CD4-positive, alpha-beta memory T cell (primary cell): ENCODE measurements at regions of chr9 and their contacts with region 1.

Region 1: DNA sequence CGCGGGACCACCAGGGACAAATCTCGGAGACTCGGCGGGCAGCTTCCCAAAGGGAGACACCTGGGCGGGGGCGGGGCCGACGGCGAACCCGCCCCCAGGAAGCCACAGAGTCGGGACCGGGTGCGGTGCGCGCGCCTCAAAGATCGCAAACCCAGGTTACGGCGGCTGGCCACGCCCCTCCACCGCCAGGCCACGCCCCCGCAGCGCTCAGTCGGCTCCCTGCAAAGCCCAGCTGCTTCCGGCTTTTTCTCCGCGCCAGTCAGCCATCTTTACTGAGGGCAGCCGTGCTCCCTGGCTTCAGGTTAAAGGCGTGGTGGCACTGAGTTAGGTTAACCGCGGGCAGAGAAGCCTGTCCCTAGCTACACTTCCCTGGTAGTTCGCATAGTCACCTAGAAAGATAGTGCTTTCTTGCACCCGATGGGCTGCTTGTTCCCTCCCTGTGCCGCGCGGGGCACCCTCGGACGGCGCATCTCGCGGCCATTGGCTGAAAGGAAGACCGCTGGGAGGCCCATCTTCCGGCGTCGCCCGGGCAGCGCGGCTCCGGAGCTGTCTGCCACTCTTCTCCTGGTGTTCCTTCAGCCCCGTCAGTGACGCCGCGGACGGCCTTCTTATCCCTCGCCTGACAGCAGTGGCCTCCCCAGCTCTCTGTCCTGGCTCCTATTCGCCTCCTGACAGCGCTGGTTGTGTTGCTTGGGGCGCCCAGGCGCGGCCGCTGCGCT is at the start of gene TBC1D2:
- DNase-seq: peak; percentile 96 to 98 (median 97)
- H3K4me3 ChIP-seq: peak within 1 kb of the TSS; percentile 90 to 91
- H3K4me3 Mint-ChIP-seq: peak within 1 kb of the TSS; percentile 93 to 99 (median 97)
- H3K27ac ChIP-seq: peak within 1 kb of the TSS; percentile 82
- H3K27ac Mint-ChIP-seq: peak within 1 kb of the TSS; percentile 87 to 97 (median 95)
- H3K4me1 ChIP-seq: peaks cover 35% of the 10 kb centered on the region
- H3K4me1 Mint-ChIP-seq: peaks cover 23 to 50% (median 40%) of the 10 kb centered on the region in 4 donors
- H3K27me3 ChIP-seq: no peaks in the 10 kb centered on the region
- H3K27me3 Mint-ChIP-seq: no peaks in the 10 kb centered on the region
- total RNA-seq, gene TBC1D2: 11.2 to 11.4 TPM

Region 2: GRCh38 chr9:97696803-97697601 is 558.7 kb before region 1 on chr9 and contains the start of gene XPA:
- CTCF ChIA-PET with region 1: interaction called, 4 read pairs
- POLR2A ChIA-PET with region 1: interaction called, 7 read pairs
- intact Hi-C with region 1: loop called (anchors 10 kb)
- DNase-seq: peak; percentile 96 to 97 (median 96)
- H3K4me3 ChIP-seq: peak within 1 kb of the TSS; percentile 4 to 82
- H3K4me3 Mint-ChIP-seq: peak within 1 kb of the TSS; percentile 86 to 96 (median 92)
- H3K27ac ChIP-seq: peak within 1 kb of the TSS; percentile 68
- H3K27ac Mint-ChIP-seq: peak within 1 kb of the TSS; percentile 86 to 98 (median 96)
- H3K4me1 ChIP-seq: peaks cover 44% of the 10 kb centered on the region
- H3K4me1 Mint-ChIP-seq: peaks cover 41 to 56% (median 49%) of the 10 kb centered on the region in 4 donors
- H3K27me3 ChIP-seq: no peaks in the 10 kb centered on the region
- H3K27me3 Mint-ChIP-seq: no peaks in the 10 kb centered on the region
- total RNA-seq, gene XPA: 24.0 to 25.5 TPM

Region 3: DNA sequence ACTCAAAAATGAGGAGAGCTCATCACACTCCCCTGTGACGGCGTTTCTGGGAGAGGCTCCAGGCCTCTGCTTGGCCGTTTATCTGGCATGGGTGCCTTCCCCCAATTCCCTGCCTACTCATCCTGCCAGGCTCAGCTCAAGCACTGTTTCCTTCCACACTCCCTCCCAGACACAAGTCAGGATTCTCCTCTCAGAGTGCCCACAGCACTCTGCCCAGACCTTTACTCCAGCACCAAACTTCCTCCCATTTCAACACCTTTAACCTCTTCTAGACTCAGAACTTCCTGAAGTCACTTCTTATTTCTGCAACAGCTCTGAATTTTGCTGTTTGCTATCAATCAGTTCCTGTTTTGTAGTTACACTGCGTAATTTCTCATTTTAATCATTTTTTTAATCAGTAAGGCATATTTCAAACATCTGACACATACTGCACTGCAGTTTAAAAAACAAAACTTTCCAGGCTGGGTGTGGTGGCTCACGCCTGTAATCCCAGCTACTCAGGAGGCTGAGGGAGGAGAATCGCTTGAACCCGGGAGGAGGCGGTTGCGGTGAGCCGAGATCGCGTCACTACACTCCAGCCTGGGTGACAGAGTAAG is 349.4 kb before region 1 on chr9:
- CTCF ChIA-PET with region 1: interaction called, 3 read pairs
- POLR2A ChIA-PET with region 1: interaction called, 11 read pairs
- intact Hi-C with region 1: loop called (anchors 5 kb)
- DNase-seq: peak; percentile 63 to 89 (median 70)
- H3K4me3 ChIP-seq: peak overlapping the region in 1 of 2 donors; percentile 45
- H3K4me3 Mint-ChIP-seq: peak overlapping the region; percentile 80 to 94 (median 86)
- H3K27ac ChIP-seq: peak overlapping the region; percentile 73
- H3K27ac Mint-ChIP-seq: peak overlapping the region; percentile 93 to 99 (median 98)
- H3K4me1 ChIP-seq: peaks cover 100% of the 10 kb centered on the region
- H3K4me1 Mint-ChIP-seq: peaks cover 57 to 94% (median 76%) of the 10 kb centered on the region in 4 donors
- H3K27me3 ChIP-seq: no peaks in the 10 kb centered on the region
- H3K27me3 Mint-ChIP-seq: no peaks in the 10 kb centered on the region

Region 4: DNA sequence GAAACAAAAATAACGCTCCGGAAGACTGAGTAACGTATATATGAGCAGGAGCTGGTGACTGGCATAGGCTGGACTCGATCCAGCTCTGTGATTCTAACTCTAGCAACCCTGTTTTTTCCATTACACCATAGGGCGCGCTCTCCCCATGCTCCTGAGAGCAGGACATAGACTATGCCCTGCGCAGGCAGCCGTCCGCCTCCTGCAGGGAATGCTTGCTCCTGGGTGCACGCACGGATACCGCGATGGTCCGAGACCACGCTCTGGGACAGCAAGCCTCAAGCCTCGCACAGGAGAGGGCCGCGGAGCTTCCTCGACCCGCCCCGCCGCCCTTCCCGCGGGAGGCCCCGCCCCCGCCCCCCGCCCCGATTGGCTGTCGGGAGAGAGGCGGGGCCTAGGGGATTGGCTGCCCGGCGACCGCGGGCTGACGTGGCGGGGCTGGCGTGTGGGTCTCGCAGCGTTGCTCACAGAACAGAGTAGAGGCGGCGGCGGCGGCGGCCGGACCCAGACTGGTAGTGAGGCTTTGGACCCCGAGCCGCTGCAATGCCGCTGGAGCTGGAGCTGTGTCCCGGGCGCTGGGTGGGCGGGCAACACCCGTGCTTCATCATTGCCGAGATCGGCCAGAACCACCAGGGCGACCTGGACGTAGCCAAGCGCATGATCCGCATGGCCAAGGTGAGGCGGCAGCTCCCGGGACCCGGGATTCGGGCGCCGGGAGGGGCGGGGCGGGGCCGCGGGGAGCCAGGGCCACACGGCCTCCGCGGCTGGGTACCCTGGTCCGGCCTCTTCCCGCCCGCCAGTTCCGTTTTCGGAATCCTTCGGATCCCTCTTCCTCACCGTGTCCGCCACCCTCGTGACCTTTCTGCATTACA is 199.2 kb before region 1 on chr9 and contains the start of gene NANS:
- CTCF ChIA-PET with region 1: interaction called, 8 read pairs
- POLR2A ChIA-PET with region 1: interaction called, 66 read pairs
- intact Hi-C with region 1: loop called (anchors 1 kb)
- DNase-seq: peak; percentile 88 to 94 (median 90)
- H3K4me3 ChIP-seq: peak within 1 kb of the TSS; percentile 56 to 76
- H3K4me3 Mint-ChIP-seq: peak within 1 kb of the TSS; percentile 96 to 100 (median 99)
- H3K27ac ChIP-seq: peak within 1 kb of the TSS; percentile 82
- H3K27ac Mint-ChIP-seq: peak within 1 kb of the TSS; percentile 90 to 99 (median 99)
- H3K4me1 ChIP-seq: peaks cover 22% of the 10 kb centered on the region
- H3K4me1 Mint-ChIP-seq: peaks cover 12 to 32% (median 22%) of the 10 kb centered on the region in 4 donors
- H3K27me3 ChIP-seq: no peaks in the 10 kb centered on the region
- H3K27me3 Mint-ChIP-seq: no peaks in the 10 kb centered on the region
- total RNA-seq, gene NANS: 22.1 to 23.2 TPM

Region 5: GRCh38 chr9:98074115-98074990 is 181.4 kb before region 1 on chr9:
- CTCF ChIA-PET with region 1: interaction called, 17 read pairs
- POLR2A ChIA-PET with region 1: interaction called, 25 read pairs
- intact Hi-C with region 1: no loop called
- DNase-seq: peak; percentile 60 to 72 (median 62)
- H3K4me3 ChIP-seq: no peak overlapping the region
- H3K4me3 Mint-ChIP-seq: peak overlapping the region; percentile 52 to 89 (median 71)
- H3K27ac ChIP-seq: peak overlapping the region; percentile 67
- H3K27ac Mint-ChIP-seq: peak overlapping the region; percentile 92 to 98 (median 96)
- H3K4me1 ChIP-seq: peaks cover 31% of the 10 kb centered on the region
- H3K4me1 Mint-ChIP-seq: peaks cover 24 to 43% (median 29%) of the 10 kb centered on the region in 4 donors
- H3K27me3 ChIP-seq: no peaks in the 10 kb centered on the region
- H3K27me3 Mint-ChIP-seq: no peaks in the 10 kb centered on the region

Region 6: DNA sequence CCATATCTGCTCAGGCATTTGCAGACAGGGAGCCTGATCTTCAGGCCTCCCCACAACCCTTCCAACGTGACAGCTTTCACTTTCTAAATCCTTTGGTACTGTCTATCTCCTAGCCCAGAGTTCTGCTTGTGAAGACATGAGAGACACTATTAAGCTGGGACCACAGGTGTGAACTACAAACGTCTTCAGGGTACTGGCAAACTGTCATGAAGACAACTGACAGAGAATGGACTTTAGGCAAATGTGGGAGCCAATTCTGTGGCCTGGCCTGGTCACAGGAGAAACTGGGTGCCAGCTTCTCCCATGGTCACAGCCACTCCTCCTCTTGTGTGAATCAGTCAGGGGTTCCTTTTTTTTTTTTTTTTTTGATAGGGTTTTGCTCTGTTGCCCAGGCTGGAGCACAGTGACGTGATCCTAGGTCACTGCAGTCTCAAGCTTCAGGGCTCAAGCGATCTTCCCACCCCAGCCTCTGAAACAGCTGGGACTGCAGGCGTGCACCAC is 147.2 kb before region 1 on chr9:
- CTCF ChIA-PET with region 1: interaction called, 3 read pairs
- POLR2A ChIA-PET with region 1: interaction called, 25 read pairs
- intact Hi-C with region 1: no loop called
- DNase-seq: peak; percentile 63 to 76 (median 67)
- H3K4me3 ChIP-seq: no peak overlapping the region
- H3K4me3 Mint-ChIP-seq: peak overlapping the region; percentile 17 to 84 (median 62)
- H3K27ac ChIP-seq: peak overlapping the region; percentile 63
- H3K27ac Mint-ChIP-seq: peak overlapping the region; percentile 86 to 98 (median 96)
- H3K4me1 ChIP-seq: peaks cover 88% of the 10 kb centered on the region
- H3K4me1 Mint-ChIP-seq: peaks cover 57 to 91% (median 76%) of the 10 kb centered on the region in 4 donors
- H3K27me3 ChIP-seq: no peaks in the 10 kb centered on the region
- H3K27me3 Mint-ChIP-seq: no peaks in the 10 kb centered on the region

Region 7: DNA sequence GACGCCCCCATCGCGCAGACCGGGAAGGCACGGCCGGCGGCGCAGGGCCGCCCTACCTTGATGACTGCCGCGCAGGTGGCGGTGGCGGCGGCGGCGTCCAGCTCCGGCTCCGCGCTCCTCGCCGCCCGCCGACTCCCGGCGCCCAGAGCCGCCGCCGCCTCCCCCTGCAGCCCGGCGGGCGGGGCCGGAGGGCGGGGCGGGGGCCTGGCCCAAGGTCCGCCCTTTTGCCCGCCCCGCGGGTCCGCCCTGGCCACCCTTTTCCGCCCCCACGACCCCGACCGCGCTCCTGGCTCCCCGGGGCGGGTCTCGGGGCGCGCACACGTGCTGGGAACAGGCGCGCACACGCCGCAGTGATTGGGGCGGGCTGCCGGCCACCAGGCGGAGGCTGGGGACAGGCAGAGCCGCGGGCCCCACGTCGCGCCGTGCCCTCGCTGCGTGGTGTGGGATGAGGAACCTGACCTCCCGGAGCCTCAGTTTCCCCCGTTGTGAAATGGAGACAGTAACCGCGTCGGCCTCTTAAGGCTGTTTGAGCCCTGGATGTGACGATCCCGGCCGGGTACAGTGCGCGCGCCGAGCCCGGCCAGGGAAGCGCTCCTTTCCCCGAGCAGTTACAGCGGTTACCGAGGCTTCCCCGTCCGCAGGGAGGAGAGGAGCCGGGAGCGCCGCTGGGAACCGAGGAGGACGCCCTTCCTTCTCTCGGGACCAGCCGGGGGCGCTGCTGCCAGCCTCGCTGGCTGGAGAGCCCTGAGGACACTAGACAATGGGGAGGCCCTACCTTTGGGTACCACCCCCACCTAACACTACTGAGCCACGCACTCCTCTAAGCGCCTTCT is 63.0 kb before region 1 on chr9 and contains the start of gene CORO2A:
- CTCF ChIA-PET with region 1: interaction called, 9 read pairs
- POLR2A ChIA-PET with region 1: interaction called, 53 read pairs
- intact Hi-C with region 1: loop called (anchors 1 kb)
- DNase-seq: peak; percentile 64 to 72 (median 70)
- H3K4me3 ChIP-seq: peak within 1 kb of the TSS; percentile 52 to 67
- H3K4me3 Mint-ChIP-seq: peak within 1 kb of the TSS; percentile 83 to 95 (median 91)
- H3K27ac ChIP-seq: peak within 1 kb of the TSS; percentile 53
- H3K27ac Mint-ChIP-seq: peak within 1 kb of the TSS; percentile 63 to 91 (median 85)
- H3K4me1 ChIP-seq: peaks cover 44% of the 10 kb centered on the region
- H3K4me1 Mint-ChIP-seq: peaks cover 16 to 50% (median 37%) of the 10 kb centered on the region in 4 donors
- H3K27me3 ChIP-seq: no peaks in the 10 kb centered on the region
- H3K27me3 Mint-ChIP-seq: no peaks in the 10 kb centered on the region
- total RNA-seq, gene CORO2A: 8.3 to 8.6 TPM

Region 8: DNA sequence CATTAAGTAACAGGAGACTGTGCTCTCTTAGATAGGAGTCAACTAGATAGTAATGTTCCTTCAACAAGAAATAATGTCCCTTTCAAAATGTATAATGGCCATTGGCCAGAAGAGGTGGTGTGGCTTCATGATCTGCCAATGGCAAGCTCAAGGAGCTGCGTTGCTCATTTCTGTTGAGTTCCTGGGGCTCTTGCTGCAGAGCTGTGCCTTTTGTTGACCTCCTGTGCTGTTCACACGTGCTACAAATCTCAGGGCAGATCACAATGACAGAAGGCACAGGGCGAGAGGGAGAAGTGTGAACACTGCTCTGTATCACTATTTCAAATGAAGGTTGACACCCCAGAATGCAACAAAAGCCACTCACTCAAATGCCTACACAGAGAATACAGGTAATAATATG is 15.7 kb after region 1 on chr9:
- CTCF ChIA-PET with region 1: no interaction called
- POLR2A ChIA-PET with region 1: no interaction called
- intact Hi-C with region 1: no loop called
- DNase-seq: no peak
- H3K4me3 ChIP-seq: no peak overlapping the region
- H3K4me3 Mint-ChIP-seq: no peak overlapping the region
- H3K27ac ChIP-seq: no peak overlapping the region
- H3K27ac Mint-ChIP-seq: no peak overlapping the region
- H3K4me1 ChIP-seq: no peaks in the 10 kb centered on the region
- H3K4me1 Mint-ChIP-seq: no peaks in the 10 kb centered on the region
- H3K27me3 ChIP-seq: no peaks in the 10 kb centered on the region
- H3K27me3 Mint-ChIP-seq: peaks cover 11 to 27% of the 10 kb centered on the region in 2 donors